ENCODE measurements at regions of chr20 and their contacts with region 1.

Region 1: GRCh38 chr20:33666293-33667244 is at the start of gene ACTL10:
- DNase-seq: peak; percentile 99
- H3K4me3 Mint-ChIP-seq: peak within 1 kb of the TSS; percentile 98
- H3K27ac Mint-ChIP-seq: peak within 1 kb of the TSS; percentile 74
- H3K4me1 Mint-ChIP-seq: peaks cover 14% of the 10 kb centered on the region
- H3K27me3 Mint-ChIP-seq: no peaks in the 10 kb centered on the region
- CTCF ChIP-seq: no peak
- total RNA-seq, gene ACTL10: 1.7 and 3.2 TPM in 2 replicates

Region 2: GRCh38 chr20:33401184-33401920 is 265.2 kb before region 1 on chr20 and contains the start of gene CDK5RAP1:
- CTCF ChIA-PET with region 1: interaction called, 7 read pairs
- POLR2A ChIA-PET with region 1: interaction called, 29 read pairs
- intact Hi-C with region 1: loop called (anchors 5 kb)
- DNase-seq: peak; percentile 87
- H3K4me3 Mint-ChIP-seq: peak within 1 kb of the TSS; percentile 96
- H3K27ac Mint-ChIP-seq: peak within 1 kb of the TSS; percentile 89
- H3K4me1 Mint-ChIP-seq: peaks cover 17% of the 10 kb centered on the region
- H3K27me3 Mint-ChIP-seq: no peaks in the 10 kb centered on the region
- CTCF ChIP-seq: no peak
- total RNA-seq, gene CDK5RAP1: 41.0 and 45.0 TPM in 2 replicates

Region 3: GRCh38 chr20:33460711-33461110 is 205.9 kb before region 1 on chr20:
- CTCF ChIA-PET with region 1: interaction called, 19 read pairs
- POLR2A ChIA-PET with region 1: interaction called, 13 read pairs
- intact Hi-C with region 1: loop called (anchors 1 kb)
- DNase-seq: no peak
- H3K4me3 Mint-ChIP-seq: no peak overlapping the region
- H3K27ac Mint-ChIP-seq: no peak overlapping the region
- H3K4me1 Mint-ChIP-seq: no peaks in the 10 kb centered on the region
- H3K27me3 Mint-ChIP-seq: no peaks in the 10 kb centered on the region
- CTCF ChIP-seq: no peak

Region 4: GRCh38 chr20:33647603-33648395 is 18.8 kb before region 1 on chr20:
- CTCF ChIA-PET with region 1: interaction called, 28 read pairs
- POLR2A ChIA-PET with region 1: interaction called, 18 read pairs
- intact Hi-C with region 1: no loop called
- DNase-seq: peak; percentile 51
- H3K4me3 Mint-ChIP-seq: peak overlapping the region; percentile 63
- H3K27ac Mint-ChIP-seq: peak overlapping the region; percentile 49
- H3K4me1 Mint-ChIP-seq: peaks cover 10% of the 10 kb centered on the region
- H3K27me3 Mint-ChIP-seq: no peaks in the 10 kb centered on the region
- CTCF ChIP-seq: no peak

Region 5: DNA sequence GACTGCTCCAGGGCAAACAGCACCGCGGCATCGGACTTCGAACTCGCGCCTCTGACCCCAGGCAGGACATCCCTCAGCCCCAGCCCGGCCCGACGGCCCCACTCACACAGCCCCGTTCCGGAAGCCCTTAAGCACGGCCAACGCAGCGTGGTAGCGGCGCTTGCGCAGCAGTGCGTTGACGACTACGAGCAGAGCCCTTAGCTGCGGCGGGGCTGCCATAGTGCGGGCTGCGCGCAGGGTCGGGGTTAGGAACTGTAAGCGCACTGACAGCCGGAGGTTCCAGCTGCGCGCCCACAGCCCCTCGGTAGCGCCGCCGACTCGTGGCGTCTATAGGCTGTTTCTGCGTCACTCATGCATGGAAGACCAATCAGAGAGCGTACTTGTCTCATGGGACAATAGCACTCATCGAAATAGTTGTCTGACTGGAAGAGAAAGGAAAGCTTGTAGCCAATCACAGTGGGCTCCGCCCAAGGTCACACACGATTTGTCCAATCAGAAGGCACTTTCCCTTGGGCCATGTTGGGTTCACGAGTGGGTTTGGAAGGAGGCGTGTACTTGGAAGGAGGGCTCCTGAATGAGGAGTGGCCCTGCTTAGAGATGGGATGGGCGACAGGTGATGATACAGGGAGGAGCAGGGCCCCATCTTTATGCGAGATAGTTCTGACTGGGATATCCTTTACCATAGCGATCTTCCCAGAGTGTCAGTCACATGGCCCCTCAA is 53.6 kb after region 1 on chr20 and contains the start of gene PXMP4:
- CTCF ChIA-PET with region 1: interaction called, 4 read pairs
- POLR2A ChIA-PET with region 1: interaction called, 26 read pairs
- intact Hi-C with region 1: no loop called
- DNase-seq: peak; percentile 98
- H3K4me3 Mint-ChIP-seq: peak within 1 kb of the TSS; percentile 67
- H3K27ac Mint-ChIP-seq: peak within 1 kb of the TSS; percentile 0
- H3K4me1 Mint-ChIP-seq: peaks cover 9% of the 10 kb centered on the region
- H3K27me3 Mint-ChIP-seq: no peaks in the 10 kb centered on the region
- CTCF ChIP-seq: no peak
- total RNA-seq, gene PXMP4: 3.9 and 5.2 TPM in 2 replicates

Region 6: GRCh38 chr20:33992923-33993575 is 326.5 kb after region 1 on chr20:
- CTCF ChIA-PET with region 1: interaction called, 3 read pairs
- POLR2A ChIA-PET with region 1: interaction called, 30 read pairs
- intact Hi-C with region 1: no loop called
- DNase-seq: peak; percentile 98
- H3K4me3 Mint-ChIP-seq: peak overlapping the region; percentile 95
- H3K27ac Mint-ChIP-seq: peak overlapping the region; percentile 96
- H3K4me1 Mint-ChIP-seq: peaks cover 16% of the 10 kb centered on the region
- H3K27me3 Mint-ChIP-seq: no peaks in the 10 kb centered on the region
- CTCF ChIP-seq: no peak

Region 7: GRCh38 chr20:34129518-34130162 is 463.1 kb after region 1 on chr20:
- CTCF ChIA-PET with region 1: interaction called, 8 read pairs
- POLR2A ChIA-PET with region 1: interaction called, 4 read pairs
- intact Hi-C with region 1: loop called (anchors 1 kb)
- DNase-seq: peak; percentile 79
- H3K4me3 Mint-ChIP-seq: peak overlapping the region; percentile 17
- H3K27ac Mint-ChIP-seq: no peak overlapping the region
- H3K4me1 Mint-ChIP-seq: no peaks in the 10 kb centered on the region
- H3K27me3 Mint-ChIP-seq: peaks cover 23% of the 10 kb centered on the region
- CTCF ChIP-seq: peak; percentile 73